ENCODE measurements at regions of chr19 and their contacts with region 1.

Region 1: GRCh38 chr19:39765091-39766076 is 13.3 kb upstream of the LEUTX start:
- DNase-seq: peak; percentile 56
- ATAC-seq: no peak
- H3K4me3 Mint-ChIP-seq: no peak overlapping the region
- H3K27ac Mint-ChIP-seq: no peak overlapping the region
- H3K4me1 Mint-ChIP-seq: no peaks in the 10 kb centered on the region
- H3K27me3 Mint-ChIP-seq: peaks cover 11% of the 10 kb centered on the region
- CTCF ChIP-seq: peak; percentile 92

Region 2: DNA sequence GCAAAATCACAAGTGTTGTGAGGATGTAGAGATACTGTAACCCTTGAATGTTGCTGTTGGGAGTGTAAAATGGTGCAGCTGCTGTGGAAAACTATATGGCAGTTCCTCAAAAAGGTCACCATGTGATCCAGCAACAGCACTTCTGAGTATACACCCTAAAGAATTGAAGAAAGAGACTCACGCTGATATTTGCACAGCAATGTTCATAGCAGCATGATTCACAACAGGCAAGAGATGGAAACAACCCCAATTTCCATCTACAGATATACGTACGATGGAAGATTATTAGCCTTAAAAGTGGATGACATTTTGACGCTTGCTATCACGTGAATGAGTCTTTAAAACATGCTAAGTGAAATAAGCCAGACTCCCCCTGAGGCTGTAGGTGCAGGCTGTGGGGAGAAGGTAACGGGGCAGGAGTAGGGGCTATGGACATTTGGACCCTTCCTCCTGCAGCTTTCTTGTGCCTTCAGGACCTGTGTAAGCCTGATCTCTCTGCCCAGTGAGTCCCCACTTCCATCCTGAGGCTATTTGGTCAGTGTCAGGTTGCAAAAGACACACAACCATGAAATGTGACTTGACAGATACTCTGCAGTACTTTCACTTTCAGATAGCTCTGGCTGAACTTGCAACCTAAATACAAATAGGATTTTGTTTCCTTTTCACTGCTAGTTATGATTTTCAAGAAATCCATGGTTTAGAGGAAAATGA is 207.8 kb before region 1 on chr19:
- CTCF ChIA-PET with region 1: no interaction called
- POLR2A ChIA-PET with region 1: no interaction called
- intact Hi-C with region 1: loop called (anchors 10 kb)
- DNase-seq: no peak
- ATAC-seq: peak; percentile 66
- H3K4me3 Mint-ChIP-seq: peak overlapping the region; percentile 46
- H3K27ac Mint-ChIP-seq: peak overlapping the region; percentile 85
- H3K4me1 Mint-ChIP-seq: peaks cover 18% of the 10 kb centered on the region
- H3K27me3 Mint-ChIP-seq: no peaks in the 10 kb centered on the region
- CTCF ChIP-seq: no peak

Region 3: DNA sequence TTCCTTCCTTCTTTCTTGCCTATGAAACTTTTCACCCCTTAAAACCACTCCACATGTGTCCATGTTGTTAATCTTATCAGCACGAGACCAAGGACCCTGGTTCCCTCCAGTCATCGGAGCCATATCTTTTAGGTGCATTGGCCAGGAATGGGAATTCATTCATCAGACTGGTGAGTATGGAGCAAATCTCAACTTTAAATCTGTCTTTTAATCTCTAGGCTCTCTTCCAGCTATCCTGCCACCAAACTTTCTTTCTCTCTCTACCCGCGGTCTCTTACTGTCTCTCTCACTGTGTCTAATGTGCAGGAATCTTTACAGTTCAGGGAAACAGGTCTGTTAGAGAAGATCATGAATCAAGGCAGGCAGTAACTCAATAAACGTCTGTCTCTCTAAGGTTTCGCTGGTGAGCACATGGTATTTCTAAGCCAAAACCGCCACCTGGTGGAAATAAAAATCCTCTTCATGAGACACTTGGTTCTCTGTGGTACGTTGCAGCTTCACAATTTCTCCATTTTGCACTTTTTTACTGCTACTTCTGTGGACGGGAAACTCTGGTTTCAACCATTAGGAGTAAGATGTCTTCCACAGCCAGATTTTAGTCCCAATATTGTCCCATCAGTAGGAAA is 93.5 kb before region 1 on chr19:
- CTCF ChIA-PET with region 1: interaction called, 5 read pairs
- POLR2A ChIA-PET with region 1: no interaction called
- intact Hi-C with region 1: loop called (anchors 10 kb)
- DNase-seq: peak; percentile 63
- ATAC-seq: peak; percentile 58
- H3K4me3 Mint-ChIP-seq: no peak overlapping the region
- H3K27ac Mint-ChIP-seq: no peak overlapping the region
- H3K4me1 Mint-ChIP-seq: peaks cover 11% of the 10 kb centered on the region
- H3K27me3 Mint-ChIP-seq: peaks cover 15% of the 10 kb centered on the region
- CTCF ChIP-seq: peak; percentile 83

Region 4: GRCh38 chr19:39778763-39779162 is 13.4 kb after region 1 on chr19 and contains the start of gene LEUTX:
- CTCF ChIA-PET with region 1: interaction called, 12 read pairs
- POLR2A ChIA-PET with region 1: no interaction called
- intact Hi-C with region 1: no loop called
- DNase-seq: peak; percentile 33
- ATAC-seq: peak; percentile 47
- H3K4me3 Mint-ChIP-seq: no peak within 1 kb of the TSS
- H3K27ac Mint-ChIP-seq: no peak within 1 kb of the TSS
- H3K4me1 Mint-ChIP-seq: peaks cover 4% of the 10 kb centered on the region
- H3K27me3 Mint-ChIP-seq: peaks cover 20% of the 10 kb centered on the region
- CTCF ChIP-seq: no peak
- total RNA-seq, gene LEUTX: not detected

Region 5: GRCh38 chr19:39846176-39846677 is 80.8 kb after region 1 on chr19 and contains the start of gene FBL:
- CTCF ChIA-PET with region 1: interaction called, 19 read pairs
- POLR2A ChIA-PET with region 1: no interaction called
- intact Hi-C with region 1: no loop called
- DNase-seq: peak; percentile 98
- ATAC-seq: peak; percentile 90
- H3K4me3 Mint-ChIP-seq: peak within 1 kb of the TSS; percentile 91
- H3K27ac Mint-ChIP-seq: peak within 1 kb of the TSS; percentile 95
- H3K4me1 Mint-ChIP-seq: peaks cover 38% of the 10 kb centered on the region
- H3K27me3 Mint-ChIP-seq: no peaks in the 10 kb centered on the region
- CTCF ChIP-seq: no peak
- total RNA-seq, gene FBL: 901 to 905 TPM